PC-9 (cell line): ENCODE measurements at regions of chr12 and their contacts with region 1.

Region 1: DNA sequence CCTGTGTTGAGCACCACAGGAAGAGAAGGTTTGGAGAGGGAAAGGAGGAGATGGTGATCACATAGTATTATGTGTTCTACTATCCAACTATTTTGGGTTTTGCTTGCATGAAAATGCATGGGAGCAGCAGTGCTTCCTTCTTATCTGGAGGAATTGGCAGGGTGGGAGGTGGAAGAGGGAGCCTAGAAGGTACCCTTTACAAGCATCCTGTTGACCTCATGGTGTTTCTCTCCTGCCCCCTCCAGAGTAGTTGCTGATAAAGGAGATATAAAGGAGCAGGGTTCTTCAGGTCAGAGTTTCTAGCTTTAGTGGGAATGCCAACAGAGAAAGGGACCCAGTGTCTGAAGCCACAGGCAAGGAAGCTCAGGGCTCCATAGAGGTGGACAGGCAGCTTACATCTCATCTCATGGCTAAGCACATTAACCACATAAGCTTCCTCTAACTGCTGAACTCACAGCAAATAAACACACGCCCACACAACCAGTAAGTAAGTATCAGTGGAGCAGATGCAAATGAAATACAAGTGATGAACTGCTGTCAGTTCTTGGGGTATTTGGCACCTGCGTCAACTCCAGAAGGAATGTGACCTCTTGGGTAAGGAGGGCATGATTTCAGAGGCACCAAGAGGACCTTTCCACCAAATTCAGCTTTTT is 174.2 kb upstream of the SLC38A2 start:
- DNase-seq: peak in 1 of 2 experiments; percentile 62
- H3K4me3 ChIP-seq: no peak overlapping the region
- H3K27ac ChIP-seq: peak overlapping the region; percentile 88
- H3K4me1 ChIP-seq: peaks cover 33% of the 10 kb centered on the region
- H3K27me3 ChIP-seq: no peaks in the 10 kb centered on the region
- CTCF ChIP-seq: no peak

Region 2: GRCh38 chr12:46430340-46430948 is 116.3 kb before region 1 on chr12:
- CTCF ChIA-PET with region 1: no interaction called
- POLR2A ChIA-PET with region 1: no interaction called
- intact Hi-C with region 1: loop called (anchors 2 kb)
- DNase-seq: peak; percentile 28 to 98
- H3K4me3 ChIP-seq: peak overlapping the region; percentile 34; the same call in 1 of the 2 replicates
- H3K27ac ChIP-seq: peak overlapping the region; percentile 95
- H3K4me1 ChIP-seq: peaks cover 41% of the 10 kb centered on the region
- H3K27me3 ChIP-seq: no peaks in the 10 kb centered on the region
- CTCF ChIP-seq: no peak

Region 3: GRCh38 chr12:46473634-46474329 is 73.0 kb before region 1 on chr12:
- CTCF ChIA-PET with region 1: no interaction called
- POLR2A ChIA-PET with region 1: no interaction called
- intact Hi-C with region 1: loop called (anchors 5 kb)
- DNase-seq: peak; percentile 68 to 91
- H3K4me3 ChIP-seq: peak overlapping the region; percentile 20; the same call in 1 of the 2 replicates
- H3K27ac ChIP-seq: peak overlapping the region; percentile 85
- H3K4me1 ChIP-seq: peaks cover 80% of the 10 kb centered on the region
- H3K27me3 ChIP-seq: no peaks in the 10 kb centered on the region
- CTCF ChIP-seq: no peak

Region 4: DNA sequence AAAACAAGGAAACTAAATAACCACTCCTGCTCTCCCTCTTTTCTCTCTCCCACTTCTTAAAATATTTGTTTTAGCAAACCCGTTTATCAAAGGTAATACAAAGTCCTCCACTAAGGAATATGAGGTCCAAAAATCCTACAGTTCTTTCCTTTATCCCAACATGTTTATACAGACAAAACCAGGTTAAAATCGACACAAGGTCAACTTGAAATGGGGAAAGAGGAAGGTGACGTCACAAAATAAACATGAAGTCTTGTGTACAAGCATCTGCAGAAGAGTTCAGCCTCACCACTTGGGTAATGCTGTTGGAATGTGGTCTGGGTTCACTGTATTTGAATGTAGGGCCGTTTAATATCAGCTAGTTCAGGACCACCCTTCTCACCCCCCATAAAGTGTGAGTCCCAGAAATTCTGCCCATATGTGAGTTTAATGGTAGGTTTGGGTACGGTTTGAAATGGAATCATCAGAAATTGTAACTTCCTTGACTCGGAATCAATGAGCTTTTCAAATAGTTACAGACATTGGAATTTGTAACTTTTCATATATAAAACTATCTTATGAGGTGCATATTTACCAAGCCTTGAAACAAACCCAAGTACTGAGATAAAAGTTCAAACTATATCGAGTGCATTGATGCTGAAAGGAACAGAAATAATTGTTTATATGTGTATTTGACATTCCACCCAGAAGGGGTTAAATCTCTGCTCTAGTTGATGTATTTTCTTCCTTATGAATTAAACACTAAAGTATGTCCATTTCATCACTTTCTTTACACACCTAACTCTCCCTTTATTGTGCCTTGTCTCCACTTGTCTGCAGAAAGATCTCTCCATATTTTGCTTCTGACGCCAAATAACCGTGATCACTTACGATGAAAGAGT is 54.0 kb before region 1 on chr12:
- CTCF ChIA-PET with region 1: interaction called, 8 read pairs
- POLR2A ChIA-PET with region 1: no interaction called
- intact Hi-C with region 1: loop called (anchors 1 kb)
- DNase-seq: peak; percentile 25 to 88
- H3K4me3 ChIP-seq: peak overlapping the region; percentile 3; the same call in 1 of the 2 replicates
- H3K27ac ChIP-seq: peak overlapping the region; percentile 81
- H3K4me1 ChIP-seq: peaks cover 47% of the 10 kb centered on the region
- H3K27me3 ChIP-seq: no peaks in the 10 kb centered on the region
- CTCF ChIP-seq: no peak